Panc1 (cell line): ENCODE measurements at regions of chr3 and their contacts with region 1.

Region 1: DNA sequence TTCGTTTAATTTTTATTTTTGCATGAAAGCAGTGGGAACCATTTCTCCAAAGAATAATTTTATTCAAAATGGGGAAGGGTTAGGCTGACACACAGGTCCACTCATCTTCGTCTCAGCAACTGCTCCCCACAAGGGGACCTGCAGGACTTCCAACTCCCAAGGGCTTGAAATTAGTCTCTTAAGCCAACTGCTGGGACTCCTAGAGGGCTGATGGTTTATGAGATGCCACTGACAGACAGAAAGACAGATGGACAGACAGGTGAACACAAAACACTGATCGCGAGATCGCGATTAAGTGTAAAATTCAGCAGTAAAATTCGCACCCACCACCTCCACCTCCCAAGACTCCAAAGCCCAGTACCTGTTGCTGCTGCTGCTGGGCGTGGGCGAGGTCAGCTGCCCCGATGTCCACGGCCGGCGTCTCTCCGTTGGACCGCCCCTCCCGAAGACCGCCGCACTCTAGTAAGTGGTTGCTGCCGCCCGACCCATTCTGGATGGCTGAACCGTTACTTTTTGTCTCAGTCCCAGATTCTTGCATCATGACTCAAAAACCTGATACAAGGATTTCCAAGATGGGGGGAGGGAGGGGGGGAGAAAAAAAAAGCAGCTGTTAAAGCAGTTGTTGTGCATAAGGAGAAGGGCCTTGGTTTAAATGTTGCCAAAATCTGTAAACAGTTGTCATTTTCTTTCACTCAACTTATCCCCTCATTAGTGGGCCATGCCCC is 385.5 kb downstream of the FOXP1 start:
- DNase-seq: no peak
- ATAC-seq: no peak
- H3K4me3 ChIP-seq: no peak overlapping the region
- H3K27ac ChIP-seq: no peak overlapping the region
- H3K4me1 ChIP-seq: no peaks in the 10 kb centered on the region
- H3K27me3 ChIP-seq: no peaks in the 10 kb centered on the region
- CTCF ChIP-seq: no peak

Region 2: DNA sequence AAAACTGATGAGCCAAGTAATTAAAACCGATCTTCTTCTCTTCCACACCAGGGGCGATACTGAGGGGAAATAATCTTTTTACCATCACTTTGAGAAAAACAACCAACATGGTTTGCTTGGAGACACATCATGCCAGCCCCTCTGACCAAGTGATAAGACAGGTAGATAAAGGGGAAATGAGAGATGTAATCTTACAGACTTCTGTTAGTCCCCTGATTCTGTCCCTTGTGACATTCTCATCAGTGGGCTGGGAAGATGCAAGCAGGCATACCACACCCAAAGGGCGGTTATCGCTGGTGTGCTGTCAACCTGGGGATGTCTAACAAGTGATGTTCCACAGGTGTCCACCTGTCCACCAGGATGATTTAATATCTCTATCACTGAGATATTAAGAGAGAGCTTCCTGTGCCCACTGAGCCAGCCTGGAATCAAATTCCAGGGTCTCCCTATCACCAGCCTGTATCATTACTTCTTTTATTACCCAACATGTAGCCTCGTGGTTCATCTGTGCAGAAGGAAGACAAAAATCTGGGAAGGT is 70.5 kb after region 1 on chr3:
- CTCF ChIA-PET with region 1: no interaction called
- POLR2A ChIA-PET with region 1: interaction called, 13 read pairs
- in situ Hi-C with region 1: no loop called
- intact Hi-C with region 1: no loop called
- DNase-seq: no peak
- ATAC-seq: no peak
- H3K4me3 ChIP-seq: no peak overlapping the region
- H3K27ac ChIP-seq: no peak overlapping the region
- H3K4me1 ChIP-seq: no peaks in the 10 kb centered on the region
- H3K27me3 ChIP-seq: no peaks in the 10 kb centered on the region
- CTCF ChIP-seq: no peak

Region 3: DNA sequence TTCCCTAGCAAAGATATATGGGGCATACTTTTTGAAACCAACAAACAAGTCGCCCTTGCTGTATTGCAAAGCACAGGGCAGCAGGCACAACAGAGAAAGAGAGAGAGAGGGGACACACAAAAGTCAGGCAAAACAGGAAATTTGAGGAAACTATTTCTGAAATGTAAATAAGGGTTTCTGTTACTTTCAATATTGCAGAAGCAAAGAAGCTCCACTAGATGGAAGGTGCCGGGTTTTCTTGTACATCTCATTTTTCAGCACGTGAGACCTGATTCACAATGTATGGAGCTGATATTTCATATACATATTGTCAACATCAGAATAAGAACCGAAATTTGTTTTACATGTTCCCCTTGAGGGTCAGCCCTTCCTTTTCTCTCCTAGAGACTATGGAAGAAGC is 258.2 kb after region 1 on chr3:
- CTCF ChIA-PET with region 1: no interaction called
- POLR2A ChIA-PET with region 1: no interaction called
- in situ Hi-C with region 1: no loop called
- intact Hi-C with region 1: no loop called
- DNase-seq: no peak
- ATAC-seq: no peak
- H3K4me3 ChIP-seq: no peak overlapping the region
- H3K27ac ChIP-seq: no peak overlapping the region
- H3K4me1 ChIP-seq: no peaks in the 10 kb centered on the region
- H3K27me3 ChIP-seq: no peaks in the 10 kb centered on the region
- CTCF ChIP-seq: no peak